Activated CD4-positive, alpha-beta memory T cell treated with anti-CD3 and anti-CD28 coated beads, Interleukin-2, amount 10 ng/mL, durations not matched to agents 7 days and 5 days (primary cell): ENCODE measurements at regions of chr3 and their contacts with region 1.

Region 1: DNA sequence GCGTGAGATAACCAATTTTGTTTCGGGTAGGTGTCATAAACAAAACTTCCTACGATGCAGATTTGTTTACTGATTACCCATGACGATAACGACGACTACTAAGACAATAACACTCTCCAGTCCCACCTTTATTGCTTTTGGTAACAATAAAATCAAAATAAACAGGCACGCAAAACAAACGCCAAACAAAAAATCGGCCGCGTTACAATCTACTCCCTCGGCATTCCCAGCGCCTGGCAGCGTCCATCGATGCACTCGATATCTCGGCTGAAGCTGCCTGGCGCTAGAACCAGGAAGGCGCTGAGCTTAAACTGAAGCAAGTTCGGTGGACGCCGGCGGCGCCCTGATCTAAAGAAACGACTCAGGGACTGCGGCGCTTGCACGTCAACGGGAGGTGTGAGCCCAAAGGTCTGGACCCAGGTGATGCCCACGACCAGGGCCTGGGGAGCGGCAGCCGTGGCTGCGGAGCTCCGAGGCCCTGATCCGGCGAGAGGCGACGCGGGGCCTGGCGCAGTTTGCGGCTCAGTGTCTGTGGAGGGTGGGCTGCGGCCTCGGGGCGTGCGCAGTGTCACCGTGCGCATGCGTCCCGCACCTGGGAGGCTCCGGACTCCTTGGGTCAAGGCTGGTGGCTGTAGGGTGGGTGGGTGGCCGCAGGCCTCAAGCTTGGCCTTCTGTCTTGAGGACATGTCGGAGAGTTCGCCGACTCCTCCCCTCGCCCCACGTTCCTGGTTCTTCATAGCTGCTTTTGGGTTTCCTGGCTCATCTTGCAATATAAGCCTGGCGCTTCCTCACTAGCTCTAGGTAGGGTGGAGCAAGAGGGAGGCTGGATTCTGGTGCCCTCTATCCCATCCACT is at the start of gene RSRC1:
- DNase-seq: peak; percentile 83
- H3K4me3 Mint-ChIP-seq: peak within 1 kb of the TSS; percentile 85
- H3K27ac Mint-ChIP-seq: peak within 1 kb of the TSS; percentile 59
- H3K4me1 Mint-ChIP-seq: peaks cover 59% of the 10 kb centered on the region
- H3K27me3 Mint-ChIP-seq: peaks cover 35% of the 10 kb centered on the region
- total RNA-seq, gene RSRC1: 37.4 to 38.8 TPM

Region 2: DNA sequence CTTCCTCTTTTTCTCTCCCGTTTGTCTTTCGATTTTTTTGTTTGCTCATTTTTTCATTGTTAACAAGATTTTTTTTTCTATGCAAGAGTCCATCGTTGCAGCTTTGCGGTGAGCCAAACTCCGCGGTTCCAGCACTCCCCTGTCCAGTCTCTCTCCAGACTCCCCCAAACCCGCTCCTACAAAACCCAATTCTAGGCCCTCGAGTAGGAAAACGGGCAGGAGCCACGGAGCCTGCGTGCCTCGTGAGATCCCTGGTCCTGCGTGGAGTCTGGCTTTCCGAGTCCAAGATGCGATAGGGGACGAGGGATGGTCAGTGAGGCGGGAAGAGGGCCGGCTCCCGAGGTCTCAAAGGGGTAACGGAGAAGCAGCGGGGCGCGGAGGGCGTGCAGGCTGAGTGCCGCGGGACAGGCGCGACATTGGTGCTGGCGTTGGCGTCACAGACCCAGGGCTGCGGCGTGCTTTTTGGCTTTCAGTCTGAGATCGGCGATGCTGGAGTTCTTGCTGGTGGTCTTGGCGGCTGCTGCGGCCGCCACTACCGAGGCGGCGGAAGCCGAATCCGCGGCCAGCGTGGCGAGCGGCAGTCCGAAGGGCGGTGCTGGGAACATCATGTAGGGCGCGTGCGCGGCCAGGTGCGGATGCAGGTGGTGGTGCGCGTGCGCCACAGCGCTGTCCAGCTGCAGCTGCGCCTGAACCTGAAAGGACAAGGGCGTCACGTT is 12.3 kb before region 1 on chr3:
- CTCF ChIA-PET with region 1: interaction called, 4 read pairs
- POLR2A ChIA-PET with region 1: interaction called, 27 read pairs
- DNase-seq: peak; percentile 80
- H3K4me3 Mint-ChIP-seq: peak overlapping the region; percentile 84
- H3K27ac Mint-ChIP-seq: peak overlapping the region; percentile 19
- H3K4me1 Mint-ChIP-seq: peaks cover 20% of the 10 kb centered on the region
- H3K27me3 Mint-ChIP-seq: peaks cover 92% of the 10 kb centered on the region

Region 3: GRCh38 chr3:158120330-158120729 is 10.3 kb after region 1 on chr3:
- CTCF ChIA-PET with region 1: interaction called, 4 read pairs
- POLR2A ChIA-PET with region 1: interaction called, 10 read pairs
- DNase-seq: no peak
- H3K4me3 Mint-ChIP-seq: no peak overlapping the region
- H3K27ac Mint-ChIP-seq: no peak overlapping the region
- H3K4me1 Mint-ChIP-seq: peaks cover 3% of the 10 kb centered on the region
- H3K27me3 Mint-ChIP-seq: no peaks in the 10 kb centered on the region